Activated T-helper 2 cell treated with anti-CD3 and anti-CD28 coated beads, Interferon-gamma antibody, Interleukin-2, Interleukin-4, amounts not matched to agents 10 μg/mL and 5 μg/mL and 100 μg/mL, durations not matched to agents 14 hours and 24 hours and 36 hours (primary cell): ENCODE measurements at regions of chr2 and their contacts with region 1.

Region 1: DNA sequence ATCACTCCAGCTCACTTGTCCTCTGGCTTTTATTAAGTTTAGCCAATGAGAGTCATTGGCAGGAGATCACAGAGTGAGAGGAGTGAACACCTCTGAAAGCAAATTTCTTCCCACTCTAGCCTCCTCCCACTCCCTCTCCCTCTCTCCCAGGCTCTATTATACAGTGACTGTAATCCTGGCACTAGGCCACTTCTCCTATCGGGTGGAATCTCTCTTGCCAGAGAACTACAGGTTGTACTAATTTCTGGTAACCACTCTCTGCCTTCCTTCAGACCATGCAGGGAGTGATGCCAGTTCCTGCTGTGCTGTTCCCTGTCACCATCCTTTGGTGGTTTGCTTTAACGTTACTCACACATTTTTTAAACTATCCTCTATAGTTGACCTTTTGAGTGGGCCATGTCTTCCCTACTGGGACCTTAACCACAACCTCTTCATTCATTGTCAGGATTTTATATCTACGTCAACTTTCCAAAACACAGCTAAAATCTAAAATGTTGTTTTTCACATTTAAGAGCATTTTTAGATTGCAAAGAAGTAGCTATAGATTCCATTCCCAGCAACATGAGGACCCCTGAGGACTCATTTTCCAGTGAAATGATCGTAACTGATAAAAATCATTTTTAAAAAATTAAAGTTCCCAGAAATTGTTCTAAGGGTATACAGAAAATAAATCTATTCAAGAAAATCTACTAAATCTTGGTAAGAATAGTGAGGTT is 217.1 kb downstream of the MREG start:
- DNase-seq: no peak
- H3K4me3 Mint-ChIP-seq: no peak overlapping the region
- H3K27ac Mint-ChIP-seq: peak overlapping the region; percentile 26
- H3K4me1 Mint-ChIP-seq: peaks cover 27% of the 10 kb centered on the region
- H3K27me3 Mint-ChIP-seq: no peaks in the 10 kb centered on the region

Region 2: DNA sequence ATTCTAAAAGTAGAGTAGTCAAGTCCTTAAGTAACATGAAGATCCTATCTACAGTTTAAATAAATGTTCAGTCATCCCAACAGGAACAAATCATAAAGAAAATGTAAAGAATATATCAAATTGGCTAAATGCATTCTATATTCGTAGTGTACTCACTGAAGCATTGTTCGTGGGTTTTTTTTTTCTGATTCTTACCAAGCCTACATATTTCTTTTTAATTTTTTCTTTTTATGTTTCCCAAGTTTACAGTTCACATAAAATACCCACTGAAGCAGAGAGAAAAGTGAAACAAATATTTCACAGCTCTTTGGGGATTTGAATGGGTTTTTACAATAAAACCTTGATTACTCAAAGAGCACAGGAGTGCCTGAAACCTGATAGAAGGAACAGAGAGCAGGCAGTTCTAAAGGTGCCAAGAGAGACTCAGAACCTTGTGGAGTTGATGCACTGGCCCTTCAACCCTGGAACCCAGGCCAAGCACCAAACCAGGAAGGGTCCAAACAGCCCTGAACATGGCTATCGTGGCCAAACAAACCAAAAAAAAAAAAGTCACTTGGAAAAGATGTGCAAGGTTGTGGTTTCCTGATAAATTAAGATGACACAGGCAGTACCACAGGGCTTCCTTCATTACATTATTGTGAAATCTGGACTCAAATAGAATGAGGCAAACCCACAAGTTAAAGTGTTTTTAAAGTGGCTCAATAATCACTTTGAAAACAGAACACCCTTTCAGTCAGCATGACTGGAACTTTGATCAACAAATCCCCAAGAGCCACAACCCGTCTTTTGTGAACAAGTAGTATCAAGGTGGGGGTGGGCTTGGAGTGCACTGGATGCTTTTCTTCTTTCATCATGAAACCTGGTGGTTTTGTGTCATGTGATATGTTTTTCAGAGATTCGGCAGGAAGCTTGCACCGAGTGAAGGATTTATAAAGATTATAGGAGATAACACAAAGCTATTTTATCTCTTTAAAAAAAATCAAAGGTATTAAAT is 115.4 kb before region 1 on chr2:
- intact Hi-C with region 1: loop called (anchors 1 kb)
- DNase-seq: peak; percentile 40
- H3K4me3 Mint-ChIP-seq: peak overlapping the region; percentile 47
- H3K27ac Mint-ChIP-seq: peak overlapping the region; percentile 88
- H3K4me1 Mint-ChIP-seq: peaks cover 39% of the 10 kb centered on the region
- H3K27me3 Mint-ChIP-seq: no peaks in the 10 kb centered on the region